A549 (cell line): ENCODE measurements at regions of chr11 and their contacts with region 1.

Region 1: GRCh38 chr11:124662106-124662505 is 11.4 kb downstream of the SIAE start:
- DNase-seq: no peak
- ATAC-seq: no peak
- H3K4me3 ChIP-seq: no peak overlapping the region
- H3K27ac ChIP-seq: no peak overlapping the region
- H3K4me1 ChIP-seq: no peaks in the 10 kb centered on the region
- CTCF ChIP-seq: no peak
- EP300 ChIP-seq: no peak
- POLR2A ChIP-seq: no peak
- RAD21 ChIP-seq: no peak

Region 2: DNA sequence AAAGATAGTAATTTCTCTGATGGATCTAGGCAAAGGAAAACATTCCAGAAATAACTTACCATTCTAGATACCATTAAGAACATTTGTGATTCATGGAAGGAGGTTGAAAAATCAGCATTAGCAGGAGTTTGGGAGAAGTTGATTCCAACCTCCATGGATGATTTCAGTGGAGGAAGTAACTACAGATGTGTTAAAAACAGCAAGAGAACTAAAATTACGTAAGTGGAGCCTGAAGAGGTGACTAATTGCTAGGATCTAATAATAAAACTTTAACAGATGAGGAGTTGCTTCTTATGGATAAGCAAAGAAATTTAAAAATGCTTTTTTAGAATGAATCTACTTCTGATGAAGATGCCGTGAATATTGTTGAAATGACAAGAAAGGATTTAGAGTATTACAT is 315.6 kb before region 1 on chr11:
- CTCF ChIA-PET with region 1: no interaction called
- POLR2A ChIA-PET with region 1: no interaction called
- DNase-seq: no peak
- ATAC-seq: no peak
- H3K4me3 ChIP-seq: no peak overlapping the region
- H3K27ac ChIP-seq: no peak overlapping the region
- H3K4me1 ChIP-seq: no peaks in the 10 kb centered on the region
- CTCF ChIP-seq: no peak
- EP300 ChIP-seq: no peak
- POLR2A ChIP-seq: no peak
- RAD21 ChIP-seq: no peak

Region 3: GRCh38 chr11:124612045-124612444 is 50.1 kb before region 1 on chr11:
- CTCF ChIA-PET with region 1: no interaction called
- POLR2A ChIA-PET with region 1: no interaction called
- DNase-seq: no peak
- ATAC-seq: no peak
- H3K4me3 ChIP-seq: no peak overlapping the region
- H3K27ac ChIP-seq: no peak overlapping the region
- H3K4me1 ChIP-seq: no peaks in the 10 kb centered on the region
- CTCF ChIP-seq: no peak
- EP300 ChIP-seq: no peak
- POLR2A ChIP-seq: no peak
- RAD21 ChIP-seq: no peak

Region 4: DNA sequence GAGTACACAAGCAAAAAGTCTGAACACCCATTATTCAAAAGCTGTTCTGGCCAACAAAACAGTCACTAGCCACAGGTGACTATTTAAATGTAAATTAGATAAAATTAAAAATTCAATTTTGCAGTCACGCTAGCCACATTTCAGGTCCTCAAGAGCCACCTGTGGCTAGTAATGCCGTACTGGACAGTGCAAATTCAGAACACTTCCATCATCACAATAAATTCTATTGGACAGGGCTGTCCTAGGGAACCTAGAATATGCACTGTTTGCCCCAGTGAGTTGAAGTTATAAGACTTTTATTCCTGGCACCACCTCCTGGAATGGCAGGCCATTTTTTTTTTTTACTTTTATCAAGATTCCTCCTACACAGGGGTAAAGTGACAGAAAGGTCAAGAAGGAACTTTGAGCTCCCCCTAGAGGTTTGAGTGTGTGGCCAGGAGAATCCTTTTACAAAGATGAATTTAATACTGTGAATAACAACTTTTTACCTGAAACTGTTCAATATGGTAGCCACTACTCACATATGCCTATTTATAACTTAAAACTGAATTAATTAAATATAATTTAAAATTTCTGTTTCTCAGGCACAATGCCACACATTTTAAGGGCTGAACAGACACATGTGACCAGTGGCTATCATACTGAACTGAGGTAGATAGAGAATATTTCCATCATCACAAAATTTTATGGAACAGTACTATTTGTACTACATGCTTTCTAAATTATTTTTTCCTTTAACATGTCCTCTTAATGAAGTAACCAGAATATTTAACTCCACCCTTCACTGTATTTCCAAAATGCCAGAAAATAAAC is 131.6 kb after region 1 on chr11:
- CTCF ChIA-PET with region 1: interaction called, 11 read pairs
- POLR2A ChIA-PET with region 1: no interaction called
- DNase-seq: peak; percentile 40 to 62
- ATAC-seq: peak; percentile 59 to 88; a peak in 4 of 6 replicates
- H3K4me3 ChIP-seq: no peak overlapping the region
- H3K27ac ChIP-seq: no peak overlapping the region
- H3K4me1 ChIP-seq: peaks cover 31% of the 10 kb centered on the region
- CTCF ChIP-seq: peak; percentile 70
- EP300 ChIP-seq: no peak
- POLR2A ChIP-seq: no peak
- RAD21 ChIP-seq: peak; percentile 65 to 72